Right cardiac atrium (tissue), 5 donors: ENCODE measurements at regions of chr17 and their contacts with region 1.

Region 1: GRCh38 chr17:63406689-63407330 is 39.3 kb downstream of the CYB561 start:
- DNase-seq: peak in 2 of 3 donors; percentile 58 to 66
- ATAC-seq: peak; percentile 84 to 87
- H3K4me3 ChIP-seq: no peak overlapping the region
- H3K27ac ChIP-seq: no peak overlapping the region
- H3K4me1 ChIP-seq: no peaks in the 10 kb centered on the region
- H3K27me3 ChIP-seq: no peaks in the 10 kb centered on the region

Region 2: DNA sequence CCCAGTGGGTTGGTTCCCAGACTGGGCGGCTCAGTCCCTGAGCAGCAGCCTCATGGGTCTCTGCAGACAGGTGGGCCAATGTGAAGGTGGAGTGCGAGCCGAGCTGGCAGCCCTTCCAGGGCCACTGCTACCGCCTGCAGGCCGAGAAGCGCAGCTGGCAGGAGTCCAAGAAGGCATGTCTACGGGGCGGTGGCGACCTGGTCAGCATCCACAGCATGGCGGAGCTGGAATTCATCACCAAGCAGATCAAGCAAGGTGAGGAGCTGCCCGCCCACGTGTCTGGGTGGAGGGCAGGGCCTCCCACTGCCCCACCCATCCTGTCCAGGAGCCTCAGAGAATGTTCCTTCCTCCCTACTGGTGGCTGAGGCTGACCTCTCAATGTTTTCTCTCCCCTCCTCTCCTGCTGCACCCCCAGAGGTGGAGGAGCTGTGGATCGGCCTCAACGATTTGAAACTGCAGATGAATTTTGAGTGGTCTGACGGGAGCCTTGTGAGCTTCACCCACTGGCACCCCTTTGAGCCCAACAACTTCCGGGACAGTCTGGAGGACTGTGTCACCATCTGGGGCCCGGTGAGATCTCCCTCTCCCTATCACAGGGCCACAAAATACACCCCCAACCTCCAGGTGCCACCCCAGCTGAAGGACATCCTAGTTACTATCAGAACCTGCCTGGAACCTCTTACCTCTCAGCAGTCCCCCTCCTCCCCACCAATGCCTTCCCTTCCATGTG is 735.1 kb before region 1 on chr17:
- intact Hi-C with region 1: loop called in 1 of 4 experiments (anchors 10 kb)
- DNase-seq: peak in 1 of 3 donors; percentile 73
- ATAC-seq: peak in 1 of 2 donors; percentile 5
- H3K4me3 ChIP-seq: no peak overlapping the region
- H3K27ac ChIP-seq: no peak overlapping the region
- H3K4me1 ChIP-seq: no peaks in the 10 kb centered on the region
- H3K27me3 ChIP-seq: no peaks in the 10 kb centered on the region

Region 3: DNA sequence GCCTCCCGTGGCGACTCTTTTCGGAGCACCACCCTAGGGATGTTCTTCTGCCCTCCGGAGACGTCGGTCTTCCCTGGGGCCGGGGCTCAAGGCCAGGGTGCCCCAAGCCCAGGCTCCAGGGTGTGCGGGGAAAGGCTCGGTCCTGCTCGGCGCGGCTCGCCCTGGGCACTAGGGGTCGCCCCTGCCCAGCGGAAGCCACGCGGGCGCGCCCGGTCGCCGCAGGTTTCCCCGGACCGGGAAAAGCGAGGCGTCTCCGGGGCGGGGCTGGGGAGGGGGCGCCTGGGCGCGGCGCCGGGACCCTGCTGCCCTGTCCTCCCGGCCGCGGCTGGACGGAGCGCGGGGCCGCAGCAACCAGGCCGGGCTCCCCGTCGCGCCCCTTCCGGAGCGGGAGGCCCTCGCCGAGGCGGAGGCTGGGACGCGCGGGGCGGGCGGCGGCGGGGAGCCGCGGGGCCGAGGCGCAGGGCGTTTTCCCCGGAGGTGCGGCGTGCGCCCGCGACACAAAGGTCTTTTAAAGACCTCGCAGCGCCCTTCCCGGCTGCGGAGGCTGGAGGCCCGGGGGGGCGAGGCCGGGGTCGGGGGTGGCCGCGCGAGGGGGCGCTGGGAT is 702.9 kb before region 1 on chr17:
- intact Hi-C with region 1: loop called (anchors 5 to 10 kb)
- DNase-seq: peak; percentile 77 to 91 (median 90)
- ATAC-seq: peak; percentile 81 to 91
- H3K4me3 ChIP-seq: peak overlapping the region; percentile 81
- H3K27ac ChIP-seq: no peak overlapping the region
- H3K4me1 ChIP-seq: no peaks in the 10 kb centered on the region
- H3K27me3 ChIP-seq: no peaks in the 10 kb centered on the region

Region 4: GRCh38 chr17:63082273-63082993 is 324.4 kb before region 1 on chr17:
- intact Hi-C with region 1: loop called in 2 of 4 experiments (anchors 2 to 10 kb)
- DNase-seq: no peak
- ATAC-seq: no peak
- H3K4me3 ChIP-seq: no peak overlapping the region
- H3K27ac ChIP-seq: no peak overlapping the region
- H3K4me1 ChIP-seq: no peaks in the 10 kb centered on the region
- H3K27me3 ChIP-seq: no peaks in the 10 kb centered on the region

Region 5: GRCh38 chr17:63262751-63263476 is 143.9 kb before region 1 on chr17:
- intact Hi-C with region 1: no loop called
- DNase-seq: no peak
- ATAC-seq: no peak
- H3K4me3 ChIP-seq: no peak overlapping the region
- H3K27ac ChIP-seq: no peak overlapping the region
- H3K4me1 ChIP-seq: no peaks in the 10 kb centered on the region
- H3K27me3 ChIP-seq: no peaks in the 10 kb centered on the region

Region 6: DNA sequence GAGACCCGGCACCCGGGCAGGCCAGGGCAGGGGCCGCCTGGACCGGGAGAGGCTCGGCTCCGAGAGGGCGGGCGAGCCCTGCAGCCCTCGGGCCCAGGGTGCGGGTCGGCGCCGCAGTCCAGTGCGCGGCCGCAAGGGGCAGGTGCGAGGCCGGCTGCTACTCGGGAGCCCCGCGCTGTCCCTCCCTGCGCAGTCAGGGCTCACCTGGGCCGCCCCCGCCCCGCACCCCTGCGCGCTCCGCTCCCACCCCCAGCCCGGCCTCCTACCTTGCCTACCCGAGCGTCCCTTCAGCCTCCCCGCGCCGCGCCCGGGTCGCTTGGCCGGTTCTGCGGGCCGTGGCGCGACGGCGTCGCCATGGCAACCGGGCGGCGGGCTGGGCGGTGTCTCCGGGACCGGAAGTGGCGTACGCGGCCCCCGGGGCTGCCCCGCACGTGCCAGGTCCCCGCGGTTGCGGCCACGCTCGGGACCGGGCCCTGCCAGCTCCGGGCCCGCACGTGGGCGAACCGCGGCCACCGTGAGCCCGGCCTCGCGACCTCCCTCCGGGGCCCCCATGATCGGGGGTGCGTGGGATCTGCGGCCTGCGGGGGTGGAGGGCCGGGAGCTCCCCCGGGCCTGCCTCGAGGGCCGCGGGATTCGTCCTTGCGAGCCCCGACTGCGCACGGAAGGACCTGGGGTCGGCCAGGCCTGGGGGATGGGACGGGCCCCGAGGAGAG is 39.3 kb after region 1 on chr17 and contains the start of gene CYB561:
- intact Hi-C with region 1: no loop called
- DNase-seq: peak; percentile 88 to 93 (median 93)
- ATAC-seq: peak; percentile 77 to 79
- H3K4me3 ChIP-seq: peak within 1 kb of the TSS; percentile 69
- H3K27ac ChIP-seq: peak within 1 kb of the TSS; percentile 55
- H3K4me1 ChIP-seq: peaks cover 7% of the 10 kb centered on the region
- H3K27me3 ChIP-seq: no peaks in the 10 kb centered on the region
- total RNA-seq, gene CYB561: 19.2 to 26.5 (median 24.0) TPM